Motor neuron (in vitro differentiated cells): ENCODE measurements at regions of chr18 and their contacts with region 1.

Region 1: GRCh38 chr18:7755753-7756475 is 188.8 kb downstream of the PTPRM start:
- ATAC-seq: peak in 1 of 8 experiments; percentile 55
- H3K4me3 ChIP-seq: no peak overlapping the region
- H3K27ac ChIP-seq: no peak overlapping the region
- H3K4me1 ChIP-seq: no peaks in the 10 kb centered on the region

Region 2: DNA sequence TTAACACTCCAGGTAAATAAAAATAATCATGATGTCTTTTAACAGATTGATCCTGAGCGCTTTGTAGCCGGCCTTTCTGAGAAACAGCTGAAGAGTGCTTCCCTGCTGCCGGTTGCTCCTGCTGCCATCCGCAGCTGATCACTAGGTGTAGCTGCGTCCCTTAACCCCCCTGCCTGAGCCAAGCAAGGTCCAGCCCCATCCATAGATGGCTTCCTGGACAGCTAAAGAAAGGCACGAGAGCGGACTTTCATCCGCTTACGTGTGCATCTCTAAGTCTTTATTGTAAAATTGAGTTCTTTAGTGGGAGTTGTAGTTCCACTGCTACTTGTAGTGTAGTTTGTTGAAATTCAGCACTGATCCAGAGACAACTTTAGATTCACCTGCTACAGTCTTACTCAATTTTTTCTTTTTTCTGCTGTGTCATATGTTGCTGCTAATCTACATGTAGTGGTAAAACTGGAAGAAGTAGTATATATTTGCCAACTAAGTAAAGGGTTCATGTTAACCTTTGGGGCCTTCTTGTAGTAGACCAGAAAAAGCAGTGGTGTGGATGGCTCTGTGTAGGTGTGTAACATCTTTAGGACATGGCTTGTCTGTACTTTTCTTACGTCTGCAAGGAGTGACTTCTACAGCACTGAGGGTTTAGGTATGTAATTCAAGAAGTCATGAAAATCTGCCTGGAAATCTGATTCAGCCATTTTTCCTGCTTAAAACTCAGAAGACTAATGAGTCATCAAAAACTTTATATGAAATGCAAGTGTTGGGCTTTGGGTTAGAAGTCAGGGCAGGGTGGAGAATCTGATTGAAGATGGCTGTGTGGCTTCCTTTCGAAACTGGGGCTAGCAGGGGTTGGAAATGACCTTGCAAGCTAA is 180.5 kb before region 1 on chr18:
- in situ Hi-C with region 1: loop called in 1 of 9 experiments (anchors 25 kb)
- ATAC-seq: peak; percentile 44 to 78 (median 66)
- H3K4me3 ChIP-seq: no peak overlapping the region
- H3K27ac ChIP-seq: no peak overlapping the region
- H3K4me1 ChIP-seq: peaks cover 0 to 13% of the 10 kb centered on the region in 2 donors